ENCODE measurements at regions of chrX and their contacts with region 1.

Region 1: GRCh38 chrX:11533211-11533651 is 132.5 kb downstream of the ARHGAP6 start:
- DNase-seq: no peak
- H3K4me3 ChIP-seq: no peak overlapping the region
- H3K27ac ChIP-seq: no peak overlapping the region
- H3K4me1 ChIP-seq: no peaks in the 10 kb centered on the region
- H3K27me3 ChIP-seq: no peaks in the 10 kb centered on the region
- CTCF ChIP-seq: peak; percentile 61 to 92 (median 83)
- EP300 ChIP-seq: no peak
- POLR2A ChIP-seq: no peak

Region 2: DNA sequence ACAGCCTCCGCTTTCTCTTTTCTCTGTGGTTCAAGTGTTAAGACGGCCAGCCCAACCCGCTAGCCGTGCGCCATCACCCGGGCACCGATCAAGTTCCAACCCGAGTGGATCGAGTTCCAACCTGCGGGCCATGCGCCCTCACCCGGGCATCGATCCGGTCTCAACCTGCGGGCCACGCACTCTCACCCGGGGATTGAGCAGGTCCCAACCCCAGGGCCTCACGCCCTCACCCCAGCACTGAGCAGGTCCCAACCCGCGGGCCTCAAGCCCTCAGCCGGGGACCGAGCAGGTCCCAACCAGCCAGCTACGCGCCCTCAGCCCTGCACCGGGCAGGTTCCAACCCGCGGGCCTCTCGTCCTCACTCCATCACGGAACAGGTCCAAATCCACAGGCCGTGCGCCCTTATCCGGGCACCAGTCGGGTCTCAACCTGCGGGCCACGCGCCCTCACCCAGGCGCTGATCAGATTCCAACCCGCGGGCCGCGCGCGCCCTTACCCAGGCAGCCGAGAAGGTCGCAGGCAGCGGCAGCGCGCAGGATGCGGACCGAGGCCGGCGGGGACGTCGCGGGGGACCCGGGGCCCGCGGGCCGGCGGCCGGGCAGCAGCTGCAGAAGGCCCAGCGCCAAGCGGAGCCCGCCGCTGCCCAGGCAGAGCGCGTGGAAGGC is 1768.0 kb before region 1 on chrX:
- in situ Hi-C with region 1: no loop called
- intact Hi-C with region 1: loop called (anchors 5 kb)
- DNase-seq: no peak
- H3K4me3 ChIP-seq: no peak overlapping the region
- H3K27ac ChIP-seq: no peak overlapping the region
- H3K4me1 ChIP-seq: no peaks in the 10 kb centered on the region
- H3K27me3 ChIP-seq: peaks cover 10% of the 10 kb centered on the region
- CTCF ChIP-seq: no peak
- EP300 ChIP-seq: no peak
- POLR2A ChIP-seq: no peak

Region 3: GRCh38 chrX:10189317-10190268 is 1343.6 kb before region 1 on chrX:
- in situ Hi-C with region 1: loop called in 1 of 4 experiments (anchors 25 kb)
- intact Hi-C with region 1: no loop called
- DNase-seq: peak; percentile 79
- H3K4me3 ChIP-seq: no peak overlapping the region
- H3K27ac ChIP-seq: no peak overlapping the region
- H3K4me1 ChIP-seq: no peaks in the 10 kb centered on the region
- H3K27me3 ChIP-seq: no peaks in the 10 kb centered on the region
- CTCF ChIP-seq: peak; percentile 60 to 85 (median 63)
- EP300 ChIP-seq: no peak
- POLR2A ChIP-seq: no peak

Region 4: DNA sequence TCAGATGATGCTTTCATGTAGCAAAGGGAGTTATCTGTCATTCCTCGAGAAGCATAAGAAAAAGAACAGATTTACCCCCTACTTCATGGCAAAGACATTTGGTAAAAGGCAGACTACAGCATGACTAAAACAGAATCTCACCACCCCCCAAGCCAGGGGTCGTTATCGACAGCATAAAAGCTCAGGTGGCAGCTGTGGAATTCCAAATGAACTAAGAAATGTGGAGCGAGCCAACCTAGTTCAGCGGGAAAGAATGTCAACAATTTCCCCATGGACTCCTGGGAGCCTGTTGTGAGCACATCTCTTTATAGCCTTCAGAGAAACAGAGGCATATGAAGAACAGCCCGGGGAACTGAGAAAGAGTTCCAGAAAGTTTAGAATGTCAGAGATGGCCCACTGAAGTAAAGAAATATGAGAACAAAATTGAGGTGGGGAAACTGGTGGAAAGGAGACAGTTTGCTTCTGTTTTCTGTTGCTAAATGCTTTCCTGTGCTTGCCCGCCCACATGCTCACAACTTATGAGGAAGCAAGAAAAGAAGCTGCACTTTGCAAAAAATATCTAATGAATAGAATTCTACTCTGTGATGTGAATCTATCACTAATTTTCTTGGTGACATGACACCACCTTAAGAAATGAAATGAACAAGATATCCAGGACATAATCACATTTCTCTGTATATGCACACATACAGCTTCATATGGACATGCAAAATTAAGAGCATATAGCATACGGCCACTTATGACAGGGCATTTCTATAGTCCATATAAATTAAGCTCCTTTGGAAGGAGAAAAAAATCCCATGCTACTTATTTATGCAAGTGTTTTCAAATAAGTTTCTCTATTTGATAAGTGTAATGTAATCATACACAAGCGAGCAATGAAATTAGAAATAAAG is 777.5 kb before region 1 on chrX:
- in situ Hi-C with region 1: no loop called
- intact Hi-C with region 1: no loop called
- DNase-seq: no peak
- H3K4me3 ChIP-seq: no peak overlapping the region
- H3K27ac ChIP-seq: peak overlapping the region in 3 of 4 donors; percentile 29 to 58 (median 40)
- H3K4me1 ChIP-seq: no peaks in the 10 kb centered on the region
- H3K27me3 ChIP-seq: no peaks in the 10 kb centered on the region
- CTCF ChIP-seq: no peak
- EP300 ChIP-seq: no peak
- POLR2A ChIP-seq: no peak

Region 5: GRCh38 chrX:11143931-11144678 is 389.1 kb before region 1 on chrX:
- in situ Hi-C with region 1: loop called (anchors 25 kb)
- intact Hi-C with region 1: loop called (anchors 2 kb)
- DNase-seq: peak; percentile 58
- H3K4me3 ChIP-seq: no peak overlapping the region
- H3K27ac ChIP-seq: no peak overlapping the region
- H3K4me1 ChIP-seq: peaks cover 0 to 5% (median 0%) of the 10 kb centered on the region in 4 donors
- H3K27me3 ChIP-seq: no peaks in the 10 kb centered on the region
- CTCF ChIP-seq: peak; percentile 48 to 68 (median 60)
- EP300 ChIP-seq: no peak
- POLR2A ChIP-seq: no peak

Region 6: DNA sequence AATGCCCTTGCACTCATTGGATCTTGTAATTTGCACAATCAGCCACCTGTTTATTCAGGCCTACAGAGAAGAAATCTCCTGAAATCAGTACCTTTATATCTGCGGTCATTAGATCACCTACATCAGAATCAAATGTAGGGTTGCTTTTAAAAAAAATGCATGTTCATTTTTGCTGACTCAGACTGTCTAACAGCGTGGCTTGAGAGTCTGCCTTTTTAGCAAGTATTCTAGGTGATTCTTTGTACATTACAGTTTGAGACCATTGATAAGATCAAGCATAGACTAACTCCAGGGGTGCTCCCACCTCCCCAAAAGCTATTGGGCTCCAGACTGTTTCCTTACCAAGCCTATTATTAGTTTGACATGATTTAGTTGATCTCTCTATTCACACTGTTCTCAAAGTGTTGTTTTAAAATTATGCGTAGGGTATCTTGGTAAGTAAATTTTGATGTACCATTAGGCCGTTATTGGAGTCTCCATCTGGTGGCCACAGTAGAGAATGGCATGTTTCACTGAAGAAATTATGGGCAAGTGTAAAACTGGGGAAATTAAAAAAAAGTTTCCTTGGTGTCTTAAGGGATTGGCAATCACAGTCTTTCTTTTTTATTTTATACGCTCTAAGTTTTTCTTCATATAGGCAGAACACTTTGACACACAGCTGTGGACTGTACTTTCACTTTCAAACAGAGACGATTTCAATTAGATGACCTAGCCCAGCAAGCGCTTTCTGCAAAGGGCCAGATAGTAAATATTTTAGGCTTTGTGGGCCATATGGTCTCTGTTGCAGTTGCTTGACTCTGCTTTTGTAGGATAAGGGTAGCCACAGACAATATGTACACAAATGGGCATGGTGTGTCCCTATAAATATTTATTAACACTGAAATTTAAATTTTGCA is 191.1 kb after region 1 on chrX:
- in situ Hi-C with region 1: no loop called
- intact Hi-C with region 1: loop called (anchors 2 kb)
- DNase-seq: no peak
- H3K4me3 ChIP-seq: no peak overlapping the region
- H3K27ac ChIP-seq: no peak overlapping the region
- H3K4me1 ChIP-seq: no peaks in the 10 kb centered on the region
- H3K27me3 ChIP-seq: no peaks in the 10 kb centered on the region
- CTCF ChIP-seq: peak; percentile 49 to 74 (median 56)
- EP300 ChIP-seq: no peak
- POLR2A ChIP-seq: no peak

Region 7: DNA sequence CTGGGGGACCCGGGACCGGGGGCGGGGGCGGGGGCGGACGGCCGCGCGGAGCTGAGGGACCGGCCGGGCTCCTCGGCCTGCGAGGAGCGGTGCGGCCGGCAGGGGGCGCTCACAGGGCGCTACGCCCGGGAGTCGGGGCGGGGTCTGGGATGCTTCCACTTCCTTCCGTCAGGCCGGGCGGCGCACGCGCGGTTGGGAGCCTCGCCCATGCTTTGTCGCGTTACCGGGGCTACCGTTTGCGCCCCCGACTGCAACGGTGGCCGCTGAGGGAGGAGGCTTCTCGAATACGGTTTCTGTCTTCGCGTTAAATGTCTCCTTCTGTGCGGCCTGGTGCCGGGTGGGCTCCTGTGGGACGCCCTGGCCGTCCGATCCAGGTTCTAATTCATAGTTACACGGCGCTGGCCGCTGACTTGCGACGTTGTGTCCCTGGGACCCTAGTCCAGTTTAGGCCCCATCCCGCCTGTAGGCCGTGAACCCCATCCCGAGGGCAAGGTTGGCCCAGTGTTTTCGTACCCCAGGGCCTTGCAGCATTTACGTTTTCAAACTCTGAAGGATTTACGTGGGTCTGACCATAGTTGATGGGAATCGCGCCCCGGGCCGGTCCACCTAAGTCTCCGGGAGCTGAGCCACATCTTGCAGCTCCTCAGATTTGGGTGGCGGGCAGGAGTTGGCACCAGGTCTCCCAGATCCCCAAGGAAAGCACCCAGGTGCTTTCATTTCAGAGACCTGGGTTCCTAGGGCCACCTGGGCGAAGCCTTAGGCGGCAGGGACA is 225.4 kb after region 1 on chrX:
- in situ Hi-C with region 1: loop called in 2 of 4 experiments (anchors 25 kb)
- intact Hi-C with region 1: loop called (anchors 10 kb)
- DNase-seq: peak; percentile 88
- H3K4me3 ChIP-seq: peak overlapping the region; percentile 35 to 90 (median 71)
- H3K27ac ChIP-seq: peak overlapping the region; percentile 89 to 97 (median 92)
- H3K4me1 ChIP-seq: peaks cover 0 to 7% (median 0%) of the 10 kb centered on the region in 4 donors
- H3K27me3 ChIP-seq: no peaks in the 10 kb centered on the region
- CTCF ChIP-seq: peak; percentile 20 to 81 (median 64)
- EP300 ChIP-seq: no peak
- POLR2A ChIP-seq: peak; percentile 24

Region 8: DNA sequence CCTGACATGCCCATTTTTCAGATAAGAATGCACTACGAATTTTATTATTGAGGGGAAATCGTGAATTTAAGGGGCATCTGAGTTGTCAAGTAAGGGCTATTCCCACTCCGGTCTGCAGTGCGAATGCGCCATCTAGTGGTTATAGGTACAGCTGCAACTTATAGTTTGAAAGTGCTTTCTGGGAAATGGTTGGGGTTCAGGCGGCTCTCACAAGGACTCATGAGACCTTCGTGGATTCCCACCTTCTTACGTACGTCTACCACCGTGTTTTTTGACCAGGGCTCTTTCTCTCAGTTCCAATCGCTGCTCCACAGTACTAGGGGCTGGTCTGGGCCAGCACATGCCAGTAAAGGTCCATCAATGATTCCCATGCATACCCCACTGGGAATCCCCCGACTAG is 237.1 kb after region 1 on chrX:
- in situ Hi-C with region 1: loop called (anchors 5 to 25 kb)
- intact Hi-C with region 1: no loop called
- DNase-seq: peak; percentile 28
- H3K4me3 ChIP-seq: no peak overlapping the region
- H3K27ac ChIP-seq: no peak overlapping the region
- H3K4me1 ChIP-seq: no peaks in the 10 kb centered on the region
- H3K27me3 ChIP-seq: no peaks in the 10 kb centered on the region
- CTCF ChIP-seq: peak; percentile 67 to 85 (median 71)
- EP300 ChIP-seq: no peak
- POLR2A ChIP-seq: no peak

Region 9: DNA sequence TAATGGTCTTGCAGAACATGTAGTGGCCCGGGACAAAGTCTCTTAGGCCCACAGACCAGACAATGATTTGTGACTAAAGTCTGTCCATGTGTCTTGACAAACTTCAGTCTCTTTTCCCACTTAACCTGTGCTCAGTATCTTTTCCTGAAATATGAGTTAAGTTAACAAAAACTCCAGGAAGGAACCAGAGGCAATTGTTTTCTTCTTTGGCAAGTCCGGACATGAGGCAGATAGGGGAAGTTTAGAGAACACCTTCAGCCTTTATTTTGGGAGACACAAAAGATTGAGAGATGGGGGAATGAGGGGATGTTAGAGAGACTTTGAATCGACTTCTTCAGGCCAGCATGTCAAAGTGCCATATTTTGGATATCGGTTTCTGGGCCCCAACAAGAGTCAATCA is 524.9 kb after region 1 on chrX:
- in situ Hi-C with region 1: no loop called
- intact Hi-C with region 1: no loop called
- DNase-seq: no peak
- H3K4me3 ChIP-seq: no peak overlapping the region
- H3K27ac ChIP-seq: no peak overlapping the region
- H3K4me1 ChIP-seq: no peaks in the 10 kb centered on the region
- H3K27me3 ChIP-seq: no peaks in the 10 kb centered on the region
- CTCF ChIP-seq: no peak
- EP300 ChIP-seq: no peak
- POLR2A ChIP-seq: no peak